GM18951 (cell line): ENCODE measurements at regions of chr1 and their contacts with region 1.

Region 1: DNA sequence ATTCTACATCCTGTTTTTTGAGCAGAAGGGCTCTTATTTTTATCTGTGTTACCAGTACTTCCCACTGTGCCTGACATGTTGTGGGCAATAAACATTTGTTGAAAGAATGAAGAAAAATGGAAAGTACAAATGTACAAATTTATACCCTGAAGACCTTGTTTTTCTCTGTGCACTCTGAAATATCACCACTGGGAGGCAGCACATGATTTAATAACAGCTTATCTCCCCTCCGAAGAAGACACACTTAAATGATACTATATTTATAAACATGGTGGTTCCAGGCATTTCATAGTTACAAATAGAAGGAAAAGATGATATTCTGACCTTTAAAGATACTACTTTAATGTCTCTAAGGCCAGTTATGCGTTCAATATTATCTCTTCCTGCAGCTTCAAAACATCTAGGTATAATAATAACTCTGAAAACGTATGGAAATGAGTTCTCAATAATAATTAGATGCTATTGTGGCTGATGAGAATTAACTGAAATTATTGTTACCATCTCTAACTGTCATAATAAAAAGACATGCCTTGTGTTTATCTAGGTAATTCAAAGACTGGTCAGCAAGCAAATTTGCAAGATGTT is 12.8 kb downstream of the DYNLT5 start:
- POLR2A ChIP-seq: no peak

Region 2: GRCh38 chr1:66996018-66996682 is 231.1 kb after region 1 on chr1:
- in situ Hi-C with region 1: loop called (anchors 25 kb)
- POLR2A ChIP-seq: no peak